ENCODE measurements at regions of chr7 and their contacts with region 1.

Region 1: GRCh38 chr7:107982918-107983389 is 20.0 kb downstream of the LAMB1 start:
- DNase-seq: no peak
- H3K4me3 ChIP-seq: no peak overlapping the region
- H3K27ac ChIP-seq: no peak overlapping the region
- H3K4me1 ChIP-seq: no peaks in the 10 kb centered on the region
- H3K27me3 ChIP-seq: no peaks in the 10 kb centered on the region
- CTCF ChIP-seq: no peak

Region 2: GRCh38 chr7:107652642-107653041 is 330.3 kb before region 1 on chr7:
- CTCF ChIA-PET with region 1: no interaction called
- POLR2A ChIA-PET with region 1: no interaction called
- intact Hi-C with region 1: no loop called
- DNase-seq: no peak
- H3K4me3 ChIP-seq: no peak overlapping the region
- H3K27ac ChIP-seq: no peak overlapping the region
- H3K4me1 ChIP-seq: no peaks in the 10 kb centered on the region
- H3K27me3 ChIP-seq: no peaks in the 10 kb centered on the region
- CTCF ChIP-seq: no peak

Region 3: GRCh38 chr7:107924841-107925504 is 58.0 kb before region 1 on chr7:
- CTCF ChIA-PET with region 1: no interaction called
- POLR2A ChIA-PET with region 1: no interaction called
- intact Hi-C with region 1: loop called (anchors 5 kb)
- DNase-seq: no peak
- H3K4me3 ChIP-seq: no peak overlapping the region
- H3K27ac ChIP-seq: peak overlapping the region; percentile 14; the same call in 1 of the 2 replicates
- H3K4me1 ChIP-seq: no peaks in the 10 kb centered on the region
- H3K27me3 ChIP-seq: no peaks in the 10 kb centered on the region
- CTCF ChIP-seq: no peak

Region 4: DNA sequence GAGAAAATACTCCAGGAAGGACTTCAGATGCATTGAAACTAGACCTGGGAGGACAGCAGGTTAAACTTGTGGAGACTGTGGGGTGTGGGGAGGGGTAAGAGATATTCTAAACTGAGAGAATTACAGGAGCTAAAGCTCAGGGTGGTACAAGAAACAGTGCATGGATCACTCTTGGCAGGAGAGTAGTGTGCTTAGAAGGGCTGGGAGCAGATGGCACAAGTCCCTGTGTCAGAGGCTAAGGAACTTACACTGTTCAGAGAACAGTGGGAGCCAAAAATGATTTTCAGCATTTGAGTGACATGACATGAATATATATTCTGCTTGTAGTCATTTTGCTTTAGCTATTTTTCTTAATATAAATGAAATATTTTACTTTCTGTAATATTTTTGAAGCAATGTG is 56.0 kb after region 1 on chr7:
- CTCF ChIA-PET with region 1: no interaction called
- POLR2A ChIA-PET with region 1: interaction called, 12 read pairs
- intact Hi-C with region 1: no loop called
- DNase-seq: no peak
- H3K4me3 ChIP-seq: no peak overlapping the region
- H3K27ac ChIP-seq: no peak overlapping the region
- H3K4me1 ChIP-seq: no peaks in the 10 kb centered on the region
- H3K27me3 ChIP-seq: no peaks in the 10 kb centered on the region
- CTCF ChIP-seq: no peak

Measured in PC-9 (cell line).